ENCODE measurements at regions of chr1 and their contacts with region 1.

Region 1: DNA sequence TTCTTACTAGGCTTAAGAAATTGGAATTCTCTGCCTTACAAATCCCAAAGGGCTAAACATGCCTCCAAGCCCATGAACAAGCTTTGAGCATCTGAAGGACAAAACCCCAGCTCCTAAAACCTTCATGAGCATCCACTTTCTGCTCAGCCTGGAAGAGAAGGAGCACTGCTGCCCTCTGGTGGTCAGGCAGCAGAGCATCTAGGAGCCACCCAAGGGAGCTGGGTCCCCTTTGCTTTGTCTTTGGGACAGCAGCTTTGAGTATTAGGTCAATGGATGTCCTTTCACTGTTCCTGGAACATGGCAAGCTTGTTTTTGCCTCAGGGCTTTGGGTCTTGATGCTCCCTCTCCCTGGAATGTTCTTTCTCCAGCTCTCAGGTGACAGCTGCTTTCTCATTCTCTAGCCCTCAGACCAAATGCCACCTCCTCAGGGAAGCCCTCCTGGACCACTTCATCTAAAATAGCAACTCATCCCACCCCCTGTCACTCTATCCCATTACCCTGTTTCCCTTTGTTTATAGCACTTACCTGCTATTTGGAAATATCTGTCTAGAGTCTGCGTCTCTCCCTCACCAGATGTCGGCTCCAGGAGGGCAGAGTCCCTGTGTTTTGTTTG is 25.7 kb downstream of the RAB7B start:
- H3K4me3 Mint-ChIP-seq: no peak overlapping the region
- H3K27ac Mint-ChIP-seq: no peak overlapping the region
- H3K4me1 Mint-ChIP-seq: peaks cover 12% of the 10 kb centered on the region
- H3K27me3 Mint-ChIP-seq: peaks cover 3% of the 10 kb centered on the region

Region 2: GRCh38 chr1:205919026-205919746 is 58.3 kb before region 1 on chr1:
- intact Hi-C with region 1: loop called (anchors 1 kb)
- H3K4me3 Mint-ChIP-seq: no peak overlapping the region
- H3K27ac Mint-ChIP-seq: no peak overlapping the region
- H3K4me1 Mint-ChIP-seq: peaks cover 43% of the 10 kb centered on the region
- H3K27me3 Mint-ChIP-seq: peaks cover 12% of the 10 kb centered on the region

Measured in dendritic cell treated with granulocyte-macrophage colony-stimulating factor and Interleukin-4, amounts not matched to agents 40 ng/mL and 50 ng/mL, for 4 days (primary cell).